ENCODE measurements at regions of chr1 and their contacts with region 1.

Region 1: DNA sequence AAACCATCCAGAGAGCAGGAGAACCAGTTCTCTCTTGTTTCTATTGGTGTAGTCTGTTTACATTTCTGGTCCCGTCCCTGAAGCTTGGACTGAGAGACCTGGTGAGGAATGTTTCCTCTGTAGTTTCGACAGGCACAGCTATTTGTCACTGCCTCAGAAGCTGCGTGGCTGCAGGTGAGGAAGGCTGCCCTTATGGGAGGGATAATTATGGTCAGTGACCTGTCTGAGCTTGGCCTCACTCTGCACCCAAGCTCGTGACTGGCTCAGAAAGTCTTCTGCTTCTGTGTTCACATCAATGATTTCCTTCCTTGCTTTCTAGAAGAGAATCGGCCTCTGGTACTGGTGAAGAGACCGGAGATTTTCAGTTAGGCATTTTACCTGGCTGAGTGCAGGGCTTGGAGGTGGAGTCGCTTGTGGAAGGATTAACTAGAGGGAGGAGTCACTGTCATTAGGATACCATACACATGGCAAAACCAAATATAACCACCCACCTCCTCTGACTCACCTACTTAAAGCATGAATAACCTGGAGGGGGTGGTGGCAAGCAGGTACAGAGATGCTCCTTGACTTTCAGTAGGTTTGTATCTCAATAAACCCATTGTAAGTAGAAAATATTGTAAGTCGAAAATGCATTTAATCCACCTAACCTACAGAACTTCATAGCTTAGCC is 19.9 kb upstream of the WDR26 start:
- DNase-seq: peak; percentile 95
- ATAC-seq: peak; percentile 71
- H3K4me3 ChIP-seq: peak overlapping the region; percentile 64
- H3K27ac ChIP-seq: peak overlapping the region; percentile 91
- H3K4me1 ChIP-seq: peaks cover 42% of the 10 kb centered on the region
- H3K27me3 ChIP-seq: no peaks in the 10 kb centered on the region
- CTCF ChIP-seq: no peak

Region 2: DNA sequence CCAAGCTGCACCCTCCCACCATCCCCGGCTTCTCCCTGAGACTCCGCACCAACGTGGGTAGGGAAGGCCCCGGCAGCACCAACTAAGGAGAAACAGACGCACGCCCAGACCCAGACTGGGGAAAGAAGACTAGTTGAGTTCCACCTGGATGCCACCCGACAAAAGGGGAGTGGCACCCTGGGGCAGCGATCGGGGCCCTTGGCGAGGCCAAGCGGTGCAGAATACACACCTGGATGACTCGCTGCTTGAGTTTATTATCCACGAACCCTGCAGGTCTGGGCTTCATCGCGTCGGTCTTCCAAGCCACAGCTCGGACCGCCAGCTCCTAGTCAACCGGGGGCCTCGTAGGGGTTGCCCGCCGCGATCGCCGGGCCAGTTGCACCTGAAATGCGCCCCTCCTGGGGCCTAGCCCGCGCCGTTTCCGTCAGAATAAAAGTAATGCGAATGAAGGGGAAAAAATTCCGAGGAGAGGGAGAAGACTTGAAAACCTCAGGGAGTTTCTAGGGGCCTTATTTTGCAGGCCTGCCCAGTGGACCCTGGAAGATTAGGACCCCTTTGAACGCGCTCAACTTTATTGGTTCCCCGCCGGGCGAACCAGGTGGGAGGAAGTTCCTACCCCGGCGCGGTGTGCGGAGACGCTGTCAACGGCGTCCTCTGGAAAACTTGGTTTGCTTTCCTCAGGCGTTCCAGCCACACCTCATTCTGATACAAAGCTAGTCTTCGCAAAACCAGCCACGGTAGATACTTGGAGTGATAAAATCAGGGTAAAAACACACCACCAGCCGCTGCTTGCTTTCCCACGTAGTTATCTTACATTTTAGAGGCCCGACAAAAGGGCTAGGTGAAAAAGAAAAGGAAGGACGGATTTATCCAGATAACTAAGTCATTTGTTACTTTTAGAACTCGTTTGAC is 124.4 kb before region 1 on chr1 and contains the start of gene NVL:
- CTCF ChIA-PET with region 1: interaction called, 8 read pairs
- POLR2A ChIA-PET with region 1: no interaction called
- intact Hi-C with region 1: loop called (anchors 1 kb)
- DNase-seq: peak; percentile 96
- ATAC-seq: peak; percentile 88
- H3K4me3 ChIP-seq: peak within 1 kb of the TSS; percentile 94
- H3K27ac ChIP-seq: peak within 1 kb of the TSS; percentile 90
- H3K4me1 ChIP-seq: peaks cover 31% of the 10 kb centered on the region
- H3K27me3 ChIP-seq: no peaks in the 10 kb centered on the region
- CTCF ChIP-seq: no peak
- total RNA-seq, gene NVL: 26.6 and 37.1 TPM in 2 replicates

Region 3: DNA sequence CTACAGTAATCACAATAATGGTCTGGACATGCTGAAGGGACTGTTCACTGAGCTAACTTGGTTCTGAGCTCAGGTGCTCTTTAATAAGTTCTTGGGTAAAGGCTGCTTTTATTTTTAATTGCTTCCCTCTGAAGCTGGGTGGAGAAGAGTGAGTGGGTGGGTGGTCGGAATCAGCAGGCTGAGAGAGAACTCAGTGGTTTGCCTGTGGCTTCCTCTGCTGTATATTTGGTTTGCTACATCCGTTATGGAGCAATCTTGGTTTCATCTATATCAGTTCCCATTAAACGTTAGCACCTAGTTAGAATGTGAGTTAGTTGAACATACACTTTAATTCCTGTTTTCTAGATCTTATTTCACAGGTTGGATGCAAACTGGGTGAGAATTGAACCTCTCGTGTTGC is 74.5 kb before region 1 on chr1:
- CTCF ChIA-PET with region 1: interaction called, 4 read pairs
- POLR2A ChIA-PET with region 1: interaction called, 3 read pairs
- intact Hi-C with region 1: loop called (anchors 5 kb)
- DNase-seq: no peak
- ATAC-seq: no peak
- H3K4me3 ChIP-seq: no peak overlapping the region
- H3K27ac ChIP-seq: no peak overlapping the region
- H3K4me1 ChIP-seq: peaks cover 18% of the 10 kb centered on the region
- H3K27me3 ChIP-seq: no peaks in the 10 kb centered on the region
- CTCF ChIP-seq: no peak

Region 4: GRCh38 chr1:224427346-224427745 is 27.2 kb before region 1 on chr1:
- CTCF ChIA-PET with region 1: interaction called, 10 read pairs
- POLR2A ChIA-PET with region 1: interaction called, 9 read pairs
- intact Hi-C with region 1: loop called (anchors 1 kb)
- DNase-seq: peak; percentile 87
- ATAC-seq: peak; percentile 89
- H3K4me3 ChIP-seq: peak overlapping the region; percentile 13; the same call in 1 of the 2 replicates
- H3K27ac ChIP-seq: peak overlapping the region; percentile 70
- H3K4me1 ChIP-seq: peaks cover 47% of the 10 kb centered on the region
- H3K27me3 ChIP-seq: no peaks in the 10 kb centered on the region
- CTCF ChIP-seq: no peak

Region 5: DNA sequence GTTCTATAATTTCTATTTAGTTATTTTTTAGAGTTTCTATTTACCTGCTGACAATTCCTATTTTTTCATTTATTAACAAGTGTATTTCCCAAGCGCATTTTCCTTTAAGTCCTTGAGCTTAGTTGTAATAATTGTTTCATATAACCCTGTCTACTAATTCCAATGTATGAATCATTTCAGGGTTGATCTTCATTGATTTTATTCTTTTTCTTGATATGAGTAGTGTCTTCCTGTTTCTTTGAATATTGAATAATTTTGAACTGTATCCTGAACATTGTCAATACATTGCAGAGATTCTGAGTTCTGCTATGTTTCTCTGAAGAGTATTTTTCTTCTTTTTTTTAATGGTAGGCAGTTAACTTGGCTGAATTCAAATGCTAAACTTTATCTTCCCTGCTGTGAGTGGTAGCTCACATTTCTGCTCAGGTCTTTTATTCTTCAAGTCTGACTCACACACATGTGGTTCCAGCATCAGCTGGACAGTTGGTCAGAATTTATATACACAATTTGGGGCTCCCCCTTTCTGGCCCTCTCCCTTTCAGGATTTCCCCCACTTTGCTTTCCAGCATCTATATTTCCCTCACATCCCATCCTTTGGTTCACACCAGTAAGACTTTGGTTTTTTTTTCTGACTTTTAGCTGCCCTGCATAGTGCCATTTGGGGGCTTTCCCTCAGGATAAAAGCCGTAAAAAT is 34.4 kb after region 1 on chr1:
- CTCF ChIA-PET with region 1: interaction called, 13 read pairs
- POLR2A ChIA-PET with region 1: no interaction called
- intact Hi-C with region 1: loop called (anchors 5 kb)
- DNase-seq: no peak
- ATAC-seq: peak; percentile 31
- H3K4me3 ChIP-seq: no peak overlapping the region
- H3K27ac ChIP-seq: no peak overlapping the region
- H3K4me1 ChIP-seq: peaks cover 25% of the 10 kb centered on the region
- H3K27me3 ChIP-seq: no peaks in the 10 kb centered on the region
- CTCF ChIP-seq: no peak

Region 6: DNA sequence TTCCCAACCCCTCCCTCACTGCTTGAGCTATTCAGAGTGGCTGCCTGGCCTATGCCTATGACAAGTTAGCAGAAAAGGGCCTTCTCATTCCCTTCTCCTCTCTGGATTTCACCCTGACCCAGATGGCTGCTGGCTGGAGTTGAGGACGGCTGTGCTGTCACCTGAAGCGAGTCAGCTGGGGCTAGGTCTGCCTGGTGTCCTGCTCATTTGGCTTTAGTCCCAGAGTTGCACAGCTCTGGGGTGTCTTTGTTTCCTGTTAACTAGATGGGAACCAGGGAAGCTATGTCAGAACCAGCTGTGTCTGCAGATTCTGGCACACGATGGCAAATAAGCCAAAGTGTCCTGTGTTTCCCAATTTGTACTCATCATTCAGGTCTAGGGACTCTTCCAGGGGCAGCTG is 214.5 kb after region 1 on chr1:
- CTCF ChIA-PET with region 1: no interaction called
- POLR2A ChIA-PET with region 1: no interaction called
- intact Hi-C with region 1: no loop called
- DNase-seq: no peak
- ATAC-seq: no peak
- H3K4me3 ChIP-seq: no peak overlapping the region
- H3K27ac ChIP-seq: no peak overlapping the region
- H3K4me1 ChIP-seq: no peaks in the 10 kb centered on the region
- H3K27me3 ChIP-seq: no peaks in the 10 kb centered on the region
- CTCF ChIP-seq: no peak

Measured in PC-3 (cell line).